Activated B cell treated with CpG ODN at 0.5 μM for 24 hours (primary cell): ENCODE measurements at regions of chr6 and their contacts with region 1.

Region 1: GRCh38 chr6:10837995-10838793 is at the start of gene MAK:
- DNase-seq: peak; percentile 91
- ATAC-seq: peak; percentile 94
- H3K4me3 Mint-ChIP-seq: peak within 1 kb of the TSS; percentile 83
- H3K27ac Mint-ChIP-seq: peak within 1 kb of the TSS; percentile 77
- H3K4me1 Mint-ChIP-seq: peaks cover 23% of the 10 kb centered on the region
- H3K27me3 Mint-ChIP-seq: peaks cover 31% of the 10 kb centered on the region
- CTCF ChIP-seq: no peak
- total RNA-seq, gene MAK: 0.15 TPM in 1 of 2 replicates, not detected in the other

Region 2: DNA sequence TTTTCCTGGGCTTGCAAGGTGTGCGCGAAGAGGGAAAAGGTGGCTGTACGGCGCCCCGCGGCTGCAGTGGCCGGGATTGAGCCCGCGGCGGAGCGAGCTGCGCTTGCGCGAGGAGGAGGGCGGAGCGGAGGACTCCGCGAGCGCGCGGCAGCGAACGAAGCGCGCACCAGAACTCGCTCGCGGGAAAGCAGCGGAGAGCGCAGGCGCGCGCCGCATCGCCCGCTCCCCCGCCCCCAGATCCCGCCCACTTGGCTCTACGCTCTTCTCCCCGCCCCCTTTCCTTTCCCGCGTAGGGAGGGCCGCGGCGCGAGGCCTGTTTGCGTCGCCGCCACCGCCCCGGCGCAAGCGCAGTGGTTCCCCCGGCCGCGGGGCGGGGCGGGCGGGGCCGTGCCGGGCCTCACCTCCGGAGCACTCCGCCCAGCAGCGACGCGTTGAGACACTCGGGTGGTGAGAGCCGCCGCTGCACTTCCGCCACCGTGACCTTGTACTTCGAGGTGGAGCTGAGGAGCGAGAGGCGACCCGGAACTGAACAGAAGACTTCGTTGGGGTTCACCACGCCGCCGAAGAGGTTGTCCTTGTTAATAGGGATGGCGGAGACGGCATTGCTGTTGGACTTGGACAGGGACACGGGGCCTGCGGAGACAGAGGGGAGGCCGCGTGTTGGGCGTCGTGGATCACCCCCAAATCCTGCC is 433.9 kb before region 1 on chr6:
- CTCF ChIA-PET with region 1: no interaction called
- POLR2A ChIA-PET with region 1: no interaction called
- intact Hi-C with region 1: loop called (anchors 1 kb)
- DNase-seq: peak; percentile 80
- ATAC-seq: peak; percentile 94
- H3K4me3 Mint-ChIP-seq: peak overlapping the region; percentile 78
- H3K27ac Mint-ChIP-seq: peak overlapping the region; percentile 63
- H3K4me1 Mint-ChIP-seq: peaks cover 12% of the 10 kb centered on the region
- H3K27me3 Mint-ChIP-seq: peaks cover 54% of the 10 kb centered on the region
- CTCF ChIP-seq: no peak

Region 3: GRCh38 chr6:10694302-10695085 is 143.7 kb before region 1 on chr6 and contains the starts of genes C6orf52 and PAK1IP1:
- CTCF ChIA-PET with region 1: no interaction called
- POLR2A ChIA-PET with region 1: interaction called, 3 read pairs
- intact Hi-C with region 1: loop called (anchors 1 kb)
- DNase-seq: peak; percentile 84
- ATAC-seq: peak; percentile 94
- H3K4me3 Mint-ChIP-seq: peak within 1 kb of the TSS; percentile 99
- H3K27ac Mint-ChIP-seq: peak within 1 kb of the TSS; percentile 100
- H3K4me1 Mint-ChIP-seq: peaks cover 29% of the 10 kb centered on the region
- H3K27me3 Mint-ChIP-seq: no peaks in the 10 kb centered on the region
- CTCF ChIP-seq: no peak
- total RNA-seq, gene C6orf52: 1.0 and 1.6 TPM in 2 replicates
- total RNA-seq, gene PAK1IP1: 18.1 and 18.3 TPM in 2 replicates

Region 4: DNA sequence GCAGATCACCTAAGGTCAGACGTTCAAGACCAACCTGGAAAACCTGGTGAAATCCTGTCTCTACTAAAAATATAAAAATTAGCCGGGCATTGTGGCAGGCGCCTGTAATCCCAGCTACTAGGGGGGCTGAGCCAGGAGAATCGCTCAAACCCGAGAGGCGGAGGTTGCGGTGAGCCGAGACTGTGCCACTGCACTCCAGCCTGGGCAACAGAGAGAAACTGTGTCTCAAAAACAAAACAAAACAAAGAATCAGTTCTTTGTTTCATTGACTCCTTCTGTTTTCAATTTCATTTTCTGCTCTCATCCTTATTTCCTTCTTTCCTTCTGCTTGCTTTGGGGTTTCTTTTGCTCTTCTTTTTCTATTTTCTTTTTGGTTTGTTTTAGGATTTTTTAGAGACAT is 124.2 kb before region 1 on chr6:
- CTCF ChIA-PET with region 1: no interaction called
- POLR2A ChIA-PET with region 1: no interaction called
- intact Hi-C with region 1: no loop called
- DNase-seq: no peak
- ATAC-seq: no peak
- H3K4me3 Mint-ChIP-seq: no peak overlapping the region
- H3K27ac Mint-ChIP-seq: no peak overlapping the region
- H3K4me1 Mint-ChIP-seq: no peaks in the 10 kb centered on the region
- H3K27me3 Mint-ChIP-seq: no peaks in the 10 kb centered on the region
- CTCF ChIP-seq: no peak

Region 5: GRCh38 chr6:10747251-10747972 is 90.8 kb before region 1 on chr6 and contains the start of gene TMEM14B:
- CTCF ChIA-PET with region 1: no interaction called
- POLR2A ChIA-PET with region 1: no interaction called
- intact Hi-C with region 1: loop called (anchors 1 kb)
- DNase-seq: peak; percentile 100
- ATAC-seq: peak; percentile 98
- H3K4me3 Mint-ChIP-seq: peak within 1 kb of the TSS; percentile 95
- H3K27ac Mint-ChIP-seq: peak within 1 kb of the TSS; percentile 93
- H3K4me1 Mint-ChIP-seq: peaks cover 34% of the 10 kb centered on the region
- H3K27me3 Mint-ChIP-seq: no peaks in the 10 kb centered on the region
- CTCF ChIP-seq: no peak
- total RNA-seq, gene TMEM14B: 60.3 and 63.4 TPM in 2 replicates

Region 6: GRCh38 chr6:10901770-10902169 is 63.6 kb after region 1 on chr6:
- CTCF ChIA-PET with region 1: no interaction called
- POLR2A ChIA-PET with region 1: no interaction called
- intact Hi-C with region 1: loop called (anchors 1 kb)
- DNase-seq: no peak
- ATAC-seq: peak; percentile 94
- H3K4me3 Mint-ChIP-seq: peak overlapping the region; percentile 70
- H3K27ac Mint-ChIP-seq: peak overlapping the region; percentile 89
- H3K4me1 Mint-ChIP-seq: peaks cover 15% of the 10 kb centered on the region
- H3K27me3 Mint-ChIP-seq: no peaks in the 10 kb centered on the region
- CTCF ChIP-seq: no peak

Region 7: DNA sequence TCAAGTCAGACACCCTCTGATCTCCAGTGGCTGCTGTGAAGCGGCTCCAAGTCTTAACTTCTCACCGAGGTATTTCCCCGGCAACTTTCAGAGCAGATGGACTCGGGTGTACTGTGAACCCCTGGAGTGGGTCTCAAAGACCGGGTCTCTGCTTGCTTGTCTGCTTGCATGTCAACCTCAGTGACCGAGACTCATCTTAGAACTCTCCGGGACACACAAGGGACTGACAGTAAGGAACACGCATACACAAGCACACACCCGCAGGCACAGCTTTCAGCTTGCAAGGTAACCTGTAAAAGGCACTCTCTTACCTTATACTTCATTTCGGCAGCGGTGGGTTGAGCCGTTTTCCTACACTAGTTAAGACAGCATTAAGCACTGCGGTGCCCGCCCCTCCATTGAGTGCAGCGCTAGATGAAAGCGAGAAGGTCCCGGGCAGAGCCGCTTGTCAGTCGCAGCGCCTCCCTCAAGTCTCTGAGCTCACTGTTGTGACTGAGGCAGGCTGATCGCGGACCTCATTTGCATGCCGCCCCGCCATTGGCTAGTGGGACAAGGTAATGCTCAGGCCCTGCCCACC is 394.1 kb after region 1 on chr6 and contains the start of gene NEDD9:
- CTCF ChIA-PET with region 1: no interaction called
- POLR2A ChIA-PET with region 1: no interaction called
- intact Hi-C with region 1: loop called (anchors 10 kb)
- DNase-seq: peak; percentile 79
- ATAC-seq: peak; percentile 99
- H3K4me3 Mint-ChIP-seq: peak within 1 kb of the TSS; percentile 95
- H3K27ac Mint-ChIP-seq: peak within 1 kb of the TSS; percentile 94
- H3K4me1 Mint-ChIP-seq: peaks cover 51% of the 10 kb centered on the region
- H3K27me3 Mint-ChIP-seq: no peaks in the 10 kb centered on the region
- CTCF ChIP-seq: no peak
- total RNA-seq, gene NEDD9: 57.4 and 61.9 TPM in 2 replicates

Region 8: GRCh38 chr6:12137480-12137879 is 1299.3 kb after region 1 on chr6:
- CTCF ChIA-PET with region 1: no interaction called
- POLR2A ChIA-PET with region 1: no interaction called
- intact Hi-C with region 1: no loop called
- DNase-seq: no peak
- ATAC-seq: no peak
- H3K4me3 Mint-ChIP-seq: no peak overlapping the region
- H3K27ac Mint-ChIP-seq: no peak overlapping the region
- H3K4me1 Mint-ChIP-seq: peaks cover 4% of the 10 kb centered on the region
- H3K27me3 Mint-ChIP-seq: no peaks in the 10 kb centered on the region
- CTCF ChIP-seq: no peak